OCI-LY7 (cell line): ENCODE measurements at regions of chr3 and their contacts with region 1.

Region 1: DNA sequence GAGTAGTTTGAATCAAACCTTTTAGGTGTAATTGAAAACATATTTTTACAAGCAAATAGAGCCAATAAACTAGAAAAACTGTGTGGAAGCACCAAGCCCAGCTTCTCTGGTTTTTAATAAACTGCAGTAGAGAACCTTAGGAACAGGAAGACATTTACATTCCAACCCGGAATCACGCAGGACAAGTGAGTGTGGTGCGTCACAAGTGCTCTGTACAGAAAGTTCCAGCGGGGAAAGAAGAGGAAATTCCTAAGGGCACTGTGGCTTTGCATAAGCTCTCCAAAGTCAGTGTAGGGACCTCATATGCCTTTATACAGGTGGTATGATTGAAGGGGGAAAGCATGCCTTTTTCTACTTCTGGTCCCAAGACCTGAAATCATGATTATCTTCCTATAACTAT is 21.6 kb downstream of the COL8A1 start:
- DNase-seq: no peak
- H3K4me3 ChIP-seq: no peak overlapping the region
- H3K27ac ChIP-seq: no peak overlapping the region
- H3K4me1 ChIP-seq: no peaks in the 10 kb centered on the region
- CTCF ChIP-seq: no peak

Region 2: DNA sequence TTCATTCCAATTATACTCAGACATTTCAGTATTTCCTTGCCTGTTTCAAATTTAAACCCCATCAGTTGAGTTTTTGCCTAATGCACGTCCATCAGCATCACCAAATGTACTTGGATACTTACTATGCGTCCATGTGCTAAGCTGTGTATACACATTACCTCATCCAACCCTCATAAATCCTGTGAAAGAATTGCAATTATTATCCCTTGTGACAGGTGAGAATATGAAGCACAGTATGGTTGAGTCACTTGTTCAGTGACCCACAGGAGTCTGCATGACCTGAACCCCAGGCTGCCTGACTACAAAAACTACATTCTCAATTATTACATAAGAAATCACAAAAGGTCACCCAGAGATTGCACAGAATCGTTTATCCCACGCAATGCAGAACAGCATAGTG is 1159.9 kb before region 1 on chr3:
- CTCF ChIA-PET with region 1: no interaction called
- POLR2A ChIA-PET with region 1: no interaction called
- intact Hi-C with region 1: loop called (anchors 10 kb)
- DNase-seq: no peak
- H3K4me3 ChIP-seq: no peak overlapping the region
- H3K27ac ChIP-seq: no peak overlapping the region
- H3K4me1 ChIP-seq: no peaks in the 10 kb centered on the region
- CTCF ChIP-seq: no peak

Region 3: GRCh38 chr3:99699841-99700240 is 39.9 kb after region 1 on chr3:
- CTCF ChIA-PET with region 1: no interaction called
- POLR2A ChIA-PET with region 1: no interaction called
- intact Hi-C with region 1: no loop called
- DNase-seq: no peak
- H3K4me3 ChIP-seq: no peak overlapping the region
- H3K27ac ChIP-seq: no peak overlapping the region
- H3K4me1 ChIP-seq: no peaks in the 10 kb centered on the region
- CTCF ChIP-seq: no peak